ENCODE measurements at regions of chr5 and their contacts with region 1.

Region 1: GRCh38 chr5:41524174-41524573 is 13.8 kb upstream of the PLCXD3 start:
- DNase-seq: no peak
- ATAC-seq: no peak
- H3K4me3 ChIP-seq: no peak overlapping the region
- H3K27ac ChIP-seq: no peak overlapping the region
- H3K4me1 ChIP-seq: no peaks in the 10 kb centered on the region
- H3K27me3 ChIP-seq: peaks cover 0 to 3% (median 0%) of the 10 kb centered on the region in 3 donors
- CTCF ChIP-seq: no peak

Region 2: DNA sequence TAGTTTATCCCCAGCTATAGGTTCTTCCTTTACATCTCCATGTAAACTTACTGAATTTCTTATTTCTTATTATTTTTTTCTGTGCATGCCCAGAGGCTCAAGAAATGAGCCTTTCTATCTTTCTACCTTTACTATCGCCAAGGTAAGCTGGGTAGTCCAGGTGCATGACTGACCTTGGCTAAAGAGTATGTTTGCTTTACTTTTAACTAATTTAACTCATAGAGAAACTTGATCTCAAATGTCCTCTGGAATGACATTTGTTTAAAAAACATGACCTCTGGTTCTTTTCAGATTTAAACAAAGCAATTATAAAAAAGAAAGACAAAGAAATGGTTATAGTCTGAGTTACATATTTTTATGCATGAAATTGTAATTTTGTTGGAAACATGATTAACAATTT is 311.2 kb before region 1 on chr5:
- intact Hi-C with region 1: no loop called
- DNase-seq: no peak
- ATAC-seq: no peak
- H3K4me3 ChIP-seq: no peak overlapping the region
- H3K27ac ChIP-seq: no peak overlapping the region
- H3K4me1 ChIP-seq: no peaks in the 10 kb centered on the region
- H3K27me3 ChIP-seq: no peaks in the 10 kb centered on the region
- CTCF ChIP-seq: no peak

Region 3: GRCh38 chr5:41815663-41816229 is 291.6 kb after region 1 on chr5:
- intact Hi-C with region 1: no loop called
- DNase-seq: no peak
- ATAC-seq: no peak
- H3K4me3 ChIP-seq: no peak overlapping the region
- H3K27ac ChIP-seq: no peak overlapping the region
- H3K4me1 ChIP-seq: no peaks in the 10 kb centered on the region
- H3K27me3 ChIP-seq: no peaks in the 10 kb centered on the region
- CTCF ChIP-seq: no peak

Region 4: GRCh38 chr5:43161244-43161643 is 1637.1 kb after region 1 on chr5:
- intact Hi-C with region 1: loop called in 1 of 2 experiments (anchors 5 kb)
- DNase-seq: no peak
- ATAC-seq: no peak
- H3K4me3 ChIP-seq: no peak overlapping the region
- H3K27ac ChIP-seq: no peak overlapping the region
- H3K4me1 ChIP-seq: peaks cover 4% of the 10 kb centered on the region
- H3K27me3 ChIP-seq: no peaks in the 10 kb centered on the region
- CTCF ChIP-seq: no peak

Measured in psoas muscle (tissue), 8 donors.